Dorsolateral prefrontal cortex (tissue), 120 donors: ENCODE measurements at regions of chr13 and their contacts with region 1.

Region 1: DNA sequence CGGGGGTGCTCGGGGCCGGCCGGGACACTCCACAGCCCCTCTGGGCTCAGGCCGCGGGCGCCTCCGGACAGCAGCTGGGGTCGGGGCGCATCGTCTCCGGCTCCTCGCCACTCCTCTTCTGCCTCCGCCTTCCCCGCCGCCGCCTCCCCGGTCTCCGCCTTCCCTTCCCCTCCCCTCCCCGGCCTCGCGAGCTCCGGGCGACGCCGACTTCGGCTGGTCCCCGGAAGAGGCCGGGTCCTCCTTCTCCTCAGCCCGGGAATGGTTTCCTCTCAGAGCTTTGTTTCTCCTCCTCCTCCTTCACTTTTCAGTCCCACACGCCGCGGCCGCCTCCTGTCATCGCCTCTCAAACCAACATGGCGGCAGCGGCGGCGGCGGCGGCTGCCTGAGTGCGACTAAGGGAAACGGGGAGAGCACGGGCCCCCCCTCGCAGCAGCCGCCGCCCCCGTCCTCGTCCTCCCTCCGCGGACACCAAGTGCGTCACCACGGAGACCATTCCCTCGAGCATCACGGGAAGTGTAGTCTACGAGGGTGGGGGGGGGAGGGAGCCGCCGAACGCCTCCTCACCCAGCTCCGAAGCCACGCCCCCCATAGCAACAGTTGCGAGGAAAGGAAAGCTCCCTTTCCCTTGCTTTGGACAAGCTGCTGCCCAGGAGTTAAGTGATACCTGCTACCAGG is at the start of gene UBL3:
- DNase-seq: peak; percentile 92 to 98 (median 96)
- H3K4me3 ChIP-seq: peak within 1 kb of the TSS; percentile 57 to 97 (median 88)
- H3K27ac ChIP-seq: peak within 1 kb of the TSS; percentile 93 to 100 (median 99)
- H3K27me3 ChIP-seq: no peaks in the 10 kb centered on the region
- CTCF ChIP-seq: peak in 8 of 56 donors; percentile 6 to 26 (median 12)
- total RNA-seq, gene UBL3: 53.7 to 110 (median 72.5) TPM

Region 2: DNA sequence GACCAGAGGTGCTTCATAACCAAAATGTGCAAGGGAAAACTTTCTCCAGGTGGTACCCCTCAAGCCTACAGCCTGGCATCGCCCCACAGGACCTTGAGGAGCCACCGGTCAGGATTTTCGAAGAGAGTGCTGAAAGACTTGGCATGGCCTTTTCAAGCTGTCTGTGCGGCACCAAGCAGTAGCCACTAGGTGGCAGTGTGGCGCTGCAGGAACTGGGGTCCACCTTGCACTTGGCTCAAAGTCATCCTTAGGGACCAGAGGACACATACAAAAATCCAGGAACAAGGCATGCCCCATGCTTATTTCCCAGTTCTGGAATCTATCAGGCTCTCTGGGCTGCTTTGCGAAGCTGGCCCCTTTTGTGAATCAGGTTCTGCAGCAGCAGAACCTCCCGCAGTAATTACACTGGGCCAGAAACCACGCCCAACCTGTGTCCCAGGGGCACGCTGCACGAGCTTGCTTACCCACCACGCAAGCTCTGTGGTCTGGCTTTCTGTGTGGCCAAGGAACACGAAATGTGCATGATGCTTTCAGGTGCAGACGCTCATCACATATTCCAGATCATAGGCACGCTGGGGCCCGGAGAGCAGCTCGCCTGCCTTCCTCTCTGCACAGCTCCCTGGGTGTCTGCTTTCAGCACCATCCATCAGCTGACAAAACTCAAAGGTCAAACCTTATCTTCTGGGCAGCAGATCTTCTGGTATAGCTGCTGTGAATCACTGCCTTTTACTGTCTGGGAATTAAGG is 342.1 kb before region 1 on chr13:
- intact Hi-C with region 1: loop called (anchors 2 to 5 kb)
- DNase-seq: peak; percentile 82 to 92 (median 88)
- H3K4me3 ChIP-seq: no peak overlapping the region
- H3K27ac ChIP-seq: peak overlapping the region in 33 of 59 donors; percentile 2 to 80 (median 39)
- H3K27me3 ChIP-seq: peaks cover 0 to 12% (median 0%) of the 10 kb centered on the region in 45 donors
- CTCF ChIP-seq: peak; percentile 83 to 99 (median 97)

Region 3: GRCh38 chr13:29763436-29764180 is 86.8 kb before region 1 on chr13:
- intact Hi-C with region 1: loop called in 1 of 2 experiments (anchors 5 kb)
- DNase-seq: no peak
- H3K4me3 ChIP-seq: no peak overlapping the region
- H3K27ac ChIP-seq: peak overlapping the region in 5 of 59 donors; percentile 4 to 85 (median 11)
- H3K27me3 ChIP-seq: no peaks in the 10 kb centered on the region
- CTCF ChIP-seq: no peak

Region 4: GRCh38 chr13:29830000-29830399 is 20.4 kb before region 1 on chr13:
- intact Hi-C with region 1: no loop called
- DNase-seq: no peak
- H3K4me3 ChIP-seq: no peak overlapping the region
- H3K27ac ChIP-seq: no peak overlapping the region
- H3K27me3 ChIP-seq: no peaks in the 10 kb centered on the region
- CTCF ChIP-seq: no peak

Region 5: GRCh38 chr13:29884671-29885430 is 34.5 kb after region 1 on chr13:
- intact Hi-C with region 1: loop called (anchors 5 kb)
- DNase-seq: peak in 2 of 10 donors; percentile 42 to 56
- H3K4me3 ChIP-seq: peak overlapping the region in 42 of 59 donors; percentile 1 to 54 (median 24)
- H3K27ac ChIP-seq: peak overlapping the region; percentile 0 to 92 (median 82)
- H3K27me3 ChIP-seq: no peaks in the 10 kb centered on the region
- CTCF ChIP-seq: peak in 2 of 56 donors; percentile 6 to 14

Region 6: DNA sequence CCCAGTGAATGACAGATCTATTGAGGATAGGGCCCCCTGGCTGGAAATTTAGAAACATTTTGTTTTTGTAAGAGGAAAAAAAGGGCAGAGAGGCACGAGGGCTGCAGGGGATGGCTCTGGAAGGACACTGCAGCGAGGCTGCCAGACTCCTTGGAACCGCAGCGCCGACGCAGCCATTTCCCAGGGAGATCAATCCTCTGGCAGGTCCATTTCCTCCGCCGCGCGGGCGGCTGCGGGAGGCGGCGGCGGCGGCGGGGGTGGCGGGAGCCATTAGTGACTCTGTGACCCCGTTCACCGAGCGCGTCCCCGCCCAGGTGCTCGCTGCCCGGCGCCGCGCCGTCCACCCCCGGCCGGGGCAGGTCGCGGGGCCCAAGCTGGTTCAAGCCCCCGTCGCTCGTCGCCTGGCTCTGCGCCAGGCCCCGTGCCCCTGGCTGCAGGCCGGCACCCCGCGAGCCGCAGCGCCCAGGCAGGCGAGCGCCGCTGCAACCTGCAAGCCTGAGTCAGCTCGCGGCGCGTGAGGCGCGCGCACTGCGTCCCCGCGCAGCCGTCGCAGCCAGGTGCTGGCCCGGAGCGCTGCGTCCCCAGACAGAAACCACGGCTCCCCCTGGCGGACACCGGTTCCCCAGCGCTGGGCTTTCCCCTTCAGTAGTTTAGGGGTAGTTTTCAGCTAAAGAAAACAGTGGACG is 264.4 kb after region 1 on chr13:
- intact Hi-C with region 1: loop called (anchors 1 kb)
- DNase-seq: peak; percentile 85 to 92 (median 90)
- H3K4me3 ChIP-seq: peak overlapping the region; percentile 19 to 84 (median 64)
- H3K27ac ChIP-seq: peak overlapping the region in 57 of 59 donors; percentile 30 to 95 (median 79)
- H3K27me3 ChIP-seq: no peaks in the 10 kb centered on the region
- CTCF ChIP-seq: peak; percentile 66 to 98 (median 92)